ENCODE measurements at regions of chr7 and their contacts with region 1.

Region 1: DNA sequence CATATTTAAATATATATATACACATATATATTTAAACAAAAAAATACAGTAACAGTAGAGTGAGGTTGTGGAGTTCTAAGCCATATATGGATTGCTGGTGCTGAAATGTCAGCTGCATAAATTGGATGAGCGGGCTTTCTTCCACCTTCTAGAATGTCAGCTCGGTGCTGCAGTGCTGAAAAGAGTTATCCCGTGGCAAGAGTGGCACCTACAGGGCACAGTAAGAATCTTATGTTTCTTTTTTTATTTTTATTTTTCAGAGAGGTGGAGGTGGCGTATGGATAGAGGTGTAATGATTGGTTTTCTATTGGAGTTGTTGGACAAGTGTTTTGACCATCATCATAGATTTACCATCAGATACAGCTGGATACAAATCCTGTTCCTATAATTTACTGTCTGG is 86.2 kb upstream of the DYNC1I1 start:
- DNase-seq: no peak
- CTCF ChIP-seq: peak; percentile 43

Region 2: DNA sequence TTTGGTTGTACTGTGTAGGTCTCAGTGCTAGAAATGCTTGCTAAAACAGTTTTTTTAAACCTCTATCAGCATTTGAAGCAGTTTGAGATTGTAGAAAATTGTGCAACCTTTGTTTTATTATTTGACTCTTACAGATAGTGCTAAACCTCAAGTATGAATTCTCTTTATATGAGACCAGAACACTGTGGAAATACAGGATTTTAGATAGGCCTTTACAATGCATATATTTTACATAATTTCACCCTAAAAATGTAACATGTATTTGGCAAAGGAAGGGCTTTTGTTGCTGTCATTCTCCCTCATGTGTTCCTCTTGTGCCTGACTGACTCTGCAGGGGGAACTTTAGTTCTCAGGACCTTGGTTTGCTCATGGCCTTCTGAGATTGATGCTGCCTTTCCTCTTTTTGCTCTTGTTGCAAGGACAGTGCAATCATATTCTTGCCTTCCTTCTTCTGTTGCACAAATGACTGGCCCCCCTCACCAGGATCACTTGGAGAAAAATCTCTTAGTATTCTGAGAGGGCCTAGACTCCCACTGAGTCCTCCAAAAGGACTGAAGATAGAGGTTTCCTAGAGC is 590.1 kb before region 1 on chr7:
- in situ Hi-C with region 1: no loop called
- DNase-seq: no peak
- CTCF ChIP-seq: no peak

Region 3: DNA sequence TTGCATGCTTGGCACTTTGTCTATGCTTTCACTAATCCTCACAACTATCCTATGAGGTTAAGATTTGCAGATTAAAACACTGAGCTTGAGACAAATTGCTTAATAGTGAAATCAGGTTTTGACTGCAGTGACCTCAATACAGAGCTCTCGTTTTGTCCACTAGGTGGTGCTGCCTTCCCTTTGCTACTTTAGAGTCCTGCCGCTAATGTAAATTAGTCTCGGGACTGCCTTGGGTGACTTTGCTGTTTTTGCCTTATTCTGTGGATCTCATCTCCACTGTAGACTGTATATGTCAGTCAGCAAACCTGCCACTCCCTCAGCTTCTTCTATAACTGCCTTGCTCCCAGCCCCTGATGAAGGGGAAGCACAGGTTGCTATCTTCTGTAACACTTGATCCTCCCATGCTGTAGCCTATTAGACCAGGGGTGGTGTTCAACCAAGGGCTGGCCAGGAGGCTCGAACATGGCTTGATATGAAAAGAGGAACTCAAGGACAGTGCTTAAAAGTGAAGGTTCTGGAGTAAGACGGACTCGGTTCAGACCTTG is 174.3 kb before region 1 on chr7:
- in situ Hi-C with region 1: loop called (anchors 10 kb)
- DNase-seq: peak; percentile 26
- CTCF ChIP-seq: peak; percentile 88

Measured in GM13977 (cell line).